ENCODE measurements at regions of chr9 and their contacts with region 1.

Region 1: DNA sequence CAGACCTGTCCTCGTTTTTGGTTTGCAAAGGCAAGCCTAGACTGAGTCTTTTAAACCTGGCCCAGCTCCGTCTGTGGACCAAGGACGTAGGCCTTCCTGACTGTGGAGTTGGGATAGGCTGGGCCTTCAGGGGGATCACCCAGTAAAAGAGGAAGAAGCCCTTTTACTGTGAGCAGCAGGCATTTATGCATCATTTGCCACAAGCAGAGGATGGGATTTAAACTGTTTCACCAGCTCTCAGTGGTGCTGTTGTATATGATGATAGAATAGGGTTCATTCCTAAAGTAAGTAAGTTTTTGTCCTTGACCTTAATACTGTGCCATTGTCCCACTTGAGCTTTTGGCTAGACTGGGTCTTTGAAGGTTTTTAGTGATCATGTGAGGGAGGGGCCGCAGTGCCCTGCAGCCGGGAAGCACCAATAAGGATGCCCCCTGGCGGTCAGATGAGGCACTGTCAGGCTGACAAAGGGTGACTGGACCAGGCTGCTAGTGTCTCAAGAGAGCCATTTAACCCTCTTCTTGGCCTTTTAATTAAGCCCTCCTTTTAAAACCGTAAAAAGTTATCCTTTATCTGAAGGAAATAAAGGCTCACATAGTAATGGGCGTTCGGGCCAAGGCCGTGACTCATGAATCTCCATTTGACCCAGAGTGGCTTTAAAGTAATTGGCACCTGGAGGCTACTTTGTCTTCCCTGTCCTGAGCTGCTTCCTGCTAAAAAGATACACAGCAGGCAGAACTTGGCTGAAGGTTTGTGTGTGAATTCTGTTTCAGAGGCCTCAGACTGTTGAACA is 74.0 kb downstream of the UBAP1 start:
- DNase-seq: no peak
- H3K4me3 ChIP-seq: no peak overlapping the region
- CTCF ChIP-seq: peak; percentile 82

Region 2: GRCh38 chr9:34084562-34084961 is 168.3 kb before region 1 on chr9:
- CTCF ChIA-PET with region 1: interaction called, 12 read pairs
- POLR2A ChIA-PET with region 1: no interaction called
- DNase-seq: no peak
- H3K4me3 ChIP-seq: no peak overlapping the region
- CTCF ChIP-seq: no peak

Region 3: DNA sequence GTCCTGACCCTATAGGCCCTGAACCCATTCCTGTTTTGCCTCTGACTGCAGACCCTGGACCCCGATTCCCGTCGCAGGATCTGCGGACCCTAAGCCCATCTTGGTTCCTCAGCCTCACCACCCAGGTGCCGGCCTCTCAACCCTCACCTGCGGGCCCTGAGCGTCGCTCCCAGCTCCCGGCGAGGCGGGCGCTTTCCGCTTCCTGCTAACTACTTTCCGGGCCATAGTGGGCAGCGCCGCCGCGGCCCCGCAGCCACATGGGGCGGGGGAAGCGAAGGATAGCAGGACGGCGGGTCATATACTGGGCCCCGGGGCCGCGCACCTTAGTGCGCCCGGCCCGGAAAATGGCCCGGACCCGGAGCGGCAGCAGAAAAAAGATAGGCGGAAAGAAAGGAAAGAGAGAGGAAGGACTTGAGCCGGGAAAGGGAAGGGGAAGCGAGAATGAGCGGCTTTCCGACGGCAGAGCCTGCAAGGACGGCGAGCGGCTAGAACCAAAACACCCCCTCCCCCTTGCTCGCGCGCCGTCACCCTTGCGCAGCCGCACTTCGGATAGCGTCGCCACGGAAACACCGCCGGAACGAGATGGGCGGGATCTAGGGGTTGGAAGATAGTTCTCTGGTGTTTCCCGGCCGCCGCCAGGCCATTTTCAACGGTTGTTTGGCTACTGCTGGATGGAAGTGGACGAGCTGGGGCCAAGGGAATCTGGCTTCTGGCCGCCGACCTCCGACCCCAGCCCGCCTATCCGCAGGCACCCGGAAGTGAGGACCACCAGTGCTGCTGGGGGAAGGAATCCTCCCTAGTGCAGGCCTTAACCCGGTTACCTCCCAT is 126.4 kb before region 1 on chr9 and contains the start of gene DCAF12:
- CTCF ChIA-PET with region 1: interaction called, 63 read pairs
- POLR2A ChIA-PET with region 1: interaction called, 4 read pairs
- DNase-seq: peak; percentile 23
- H3K4me3 ChIP-seq: peak within 1 kb of the TSS; percentile 95
- CTCF ChIP-seq: no peak

Region 4: DNA sequence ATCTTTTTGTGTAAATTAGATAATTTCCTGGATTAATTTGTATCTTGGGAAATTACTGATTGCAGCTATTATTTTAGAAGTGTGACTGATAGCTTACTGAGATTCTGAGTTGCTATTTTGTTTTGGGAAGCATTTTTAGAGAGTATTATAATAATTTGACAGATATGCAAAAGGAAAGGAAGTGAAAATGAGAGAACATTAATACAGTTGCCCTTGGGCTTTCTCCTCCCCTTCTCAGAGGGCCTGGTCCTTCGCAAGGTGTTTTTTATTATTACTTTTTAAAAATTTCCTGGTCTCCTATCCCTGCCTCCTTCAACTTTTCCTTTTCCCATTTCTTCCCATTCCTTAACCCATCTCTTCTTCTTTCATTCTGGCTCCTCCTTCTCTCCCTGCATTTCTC is 41.5 kb before region 1 on chr9:
- CTCF ChIA-PET with region 1: interaction called, 22 read pairs
- POLR2A ChIA-PET with region 1: no interaction called
- DNase-seq: no peak
- H3K4me3 ChIP-seq: no peak overlapping the region
- CTCF ChIP-seq: no peak

Region 5: GRCh38 chr9:34233672-34234071 is 19.2 kb before region 1 on chr9:
- CTCF ChIA-PET with region 1: interaction called, 72 read pairs
- POLR2A ChIA-PET with region 1: no interaction called
- DNase-seq: no peak
- H3K4me3 ChIP-seq: no peak overlapping the region
- CTCF ChIP-seq: no peak

Region 6: GRCh38 chr9:34267660-34268059 is 14.8 kb after region 1 on chr9:
- CTCF ChIA-PET with region 1: interaction called, 100 read pairs
- POLR2A ChIA-PET with region 1: no interaction called
- DNase-seq: no peak
- H3K4me3 ChIP-seq: no peak overlapping the region
- CTCF ChIP-seq: no peak